ENCODE measurements at regions of chr4 and their contacts with region 1.

Region 1: GRCh38 chr4:88514557-88515511 is 8.7 kb downstream of the PYURF start:
- DNase-seq: no peak
- ATAC-seq: peak; percentile 94
- H3K4me3 ChIP-seq: no peak overlapping the region
- H3K27ac ChIP-seq: no peak overlapping the region
- H3K4me1 ChIP-seq: peaks cover 4% of the 10 kb centered on the region
- H3K27me3 ChIP-seq: no peaks in the 10 kb centered on the region
- CTCF ChIP-seq: no peak

Region 2: DNA sequence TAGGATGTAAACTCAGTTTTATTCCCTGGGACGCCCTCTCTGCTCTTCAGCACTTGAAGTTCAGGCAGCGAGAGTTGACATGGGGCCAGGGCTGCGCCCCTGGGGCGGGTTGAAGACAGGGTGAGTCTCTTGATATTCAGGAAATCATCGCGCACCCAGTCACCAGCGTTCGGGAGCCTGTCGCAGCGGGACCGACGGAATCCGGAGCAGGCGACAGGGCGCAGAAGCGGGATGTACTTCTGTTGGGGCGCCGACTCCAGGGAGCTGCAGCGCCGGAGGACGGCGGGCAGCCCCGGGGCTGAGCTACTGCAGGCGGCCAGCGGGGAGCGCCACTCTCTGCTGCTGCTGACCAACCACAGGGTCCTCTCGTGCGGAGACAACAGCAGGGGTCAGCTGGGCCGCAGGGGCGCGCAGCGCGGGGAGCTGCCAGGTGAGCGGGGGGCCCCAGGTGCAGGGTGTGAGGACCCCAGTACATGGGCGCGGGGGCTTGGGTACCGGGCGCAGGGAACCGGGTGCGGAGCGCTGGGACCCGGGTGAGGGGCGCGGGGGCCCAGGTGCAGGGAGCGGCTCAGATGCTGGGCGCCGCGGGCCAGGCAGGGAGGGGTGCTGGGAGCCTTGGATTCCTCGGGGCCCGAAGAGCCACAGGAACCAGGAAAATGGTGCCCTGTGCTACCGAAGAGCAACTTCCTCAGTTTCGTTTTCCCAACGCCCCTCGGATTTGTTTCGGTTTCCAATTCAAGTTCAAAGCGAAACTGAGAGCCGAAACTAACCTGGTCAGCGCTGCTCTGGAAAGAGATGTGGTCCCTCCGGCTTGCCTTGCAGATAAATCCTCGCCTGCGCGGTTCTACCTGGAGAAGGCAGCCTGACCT is 135.9 kb before region 1 on chr4 and contains the start of gene HERC6:
- intact Hi-C with region 1: loop called (anchors 10 kb)
- DNase-seq: peak; percentile 91
- ATAC-seq: peak; percentile 97
- H3K4me3 ChIP-seq: peak within 1 kb of the TSS; percentile 99
- H3K27ac ChIP-seq: peak within 1 kb of the TSS; percentile 99
- H3K4me1 ChIP-seq: no peaks in the 10 kb centered on the region
- H3K27me3 ChIP-seq: no peaks in the 10 kb centered on the region
- CTCF ChIP-seq: peak; percentile 78
- total RNA-seq, gene HERC6: 13.0 TPM

Measured in upper lobe of right lung (tissue), 1 donor.